ENCODE measurements at regions of chr1 and their contacts with region 1.

Region 1: GRCh38 chr1:10217748-10218441 is 7.5 kb downstream of the KIF1B start:
- DNase-seq: no peak
- H3K4me3 ChIP-seq: no peak overlapping the region
- H3K27ac ChIP-seq: peak overlapping the region in 1 of 2 donors; percentile 4
- H3K4me1 ChIP-seq: peaks cover 0 to 9% of the 10 kb centered on the region in 2 donors
- H3K27me3 ChIP-seq: no peaks in the 10 kb centered on the region
- CTCF ChIP-seq: no peak
- POLR2A ChIP-seq: no peak

Region 2: DNA sequence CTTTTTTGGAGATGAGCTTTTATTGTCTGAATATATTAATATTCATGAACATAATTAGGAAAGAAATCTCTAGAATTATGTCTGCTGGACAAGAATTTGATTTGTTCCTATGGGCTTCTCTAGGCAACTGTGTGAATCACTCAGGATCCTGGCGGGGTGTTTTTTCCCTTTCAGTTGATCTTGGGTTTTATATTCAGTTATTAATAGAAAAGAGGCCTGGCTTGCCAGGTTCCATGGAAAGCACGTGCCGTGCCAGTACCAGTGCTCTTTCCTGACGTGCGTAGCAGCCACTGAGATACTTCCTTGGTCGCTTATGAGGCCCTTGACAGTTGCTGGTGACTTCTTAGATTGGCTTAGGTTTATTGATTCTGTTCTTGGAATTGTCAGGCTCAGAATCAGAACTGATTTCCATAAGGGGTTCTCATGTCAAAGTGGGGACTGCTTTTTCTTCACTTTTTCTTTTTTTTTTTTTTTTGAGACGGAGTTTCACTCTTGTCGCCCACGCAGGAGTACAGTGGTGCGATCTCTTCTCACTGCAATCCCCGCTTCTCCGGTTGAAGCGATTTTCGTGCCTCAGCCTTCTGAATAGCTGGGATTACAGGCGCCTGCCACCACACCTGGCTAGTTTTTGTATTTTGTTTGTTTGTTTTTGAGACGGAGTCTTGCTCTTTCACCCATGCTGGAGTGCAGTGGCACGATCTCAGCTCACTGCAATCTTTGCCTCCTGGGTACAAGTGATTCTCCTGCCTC is 56.2 kb before region 1 on chr1:
- intact Hi-C with region 1: loop called (anchors 2 kb)
- DNase-seq: no peak
- H3K4me3 ChIP-seq: no peak overlapping the region
- H3K27ac ChIP-seq: no peak overlapping the region
- H3K4me1 ChIP-seq: no peaks in the 10 kb centered on the region
- H3K27me3 ChIP-seq: no peaks in the 10 kb centered on the region
- CTCF ChIP-seq: no peak
- POLR2A ChIP-seq: no peak

Region 3: GRCh38 chr1:10960411-10961299 is 742.8 kb after region 1 on chr1:
- intact Hi-C with region 1: no loop called
- DNase-seq: peak; percentile 57 to 85
- H3K4me3 ChIP-seq: no peak overlapping the region
- H3K27ac ChIP-seq: no peak overlapping the region
- H3K4me1 ChIP-seq: no peaks in the 10 kb centered on the region
- H3K27me3 ChIP-seq: no peaks in the 10 kb centered on the region
- CTCF ChIP-seq: peak; percentile 76 to 78 (median 77)
- POLR2A ChIP-seq: no peak

Measured in breast epithelium (tissue), 4 donors.